ENCODE measurements at regions of chrX and their contacts with region 1.

Region 1: GRCh38 chrX:131827935-131828334 is 195.2 kb upstream of the STK26 start:
- DNase-seq: peak; percentile 49
- ATAC-seq: peak; percentile 71
- H3K4me3 Mint-ChIP-seq: peak overlapping the region; percentile 70
- H3K27ac Mint-ChIP-seq: peak overlapping the region; percentile 72
- H3K4me1 Mint-ChIP-seq: peaks cover 24% of the 10 kb centered on the region
- H3K27me3 Mint-ChIP-seq: no peaks in the 10 kb centered on the region

Region 2: DNA sequence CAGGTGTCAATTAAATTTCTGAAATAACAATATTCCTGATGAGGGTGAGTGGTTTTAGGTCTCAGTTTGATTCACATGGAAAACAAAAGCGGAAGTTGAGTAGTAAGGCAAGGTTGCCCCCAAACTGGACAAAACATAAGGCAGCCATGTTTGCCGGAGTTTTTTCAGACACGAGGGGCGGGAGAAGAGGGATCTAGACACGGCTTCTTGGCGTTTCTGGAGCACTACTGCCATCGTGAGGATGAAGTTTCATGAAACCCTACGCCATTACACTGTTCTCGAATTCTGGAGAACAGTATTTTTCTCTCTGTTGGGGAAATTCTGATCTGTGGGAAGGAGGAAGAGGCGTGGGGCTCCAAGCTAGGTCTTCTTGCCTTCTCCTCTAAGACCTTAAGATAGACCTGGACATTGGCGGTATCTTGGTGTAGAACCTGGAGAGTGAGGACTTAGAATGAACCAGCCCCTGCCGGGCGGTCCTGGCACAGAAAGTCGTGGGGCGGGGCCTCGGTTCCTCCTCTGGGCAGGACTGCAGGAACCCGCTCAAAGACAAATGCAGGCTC is 123.7 kb before region 1 on chrX:
- CTCF ChIA-PET with region 1: no interaction called
- DNase-seq: no peak
- ATAC-seq: no peak
- H3K4me3 Mint-ChIP-seq: no peak overlapping the region
- H3K27ac Mint-ChIP-seq: no peak overlapping the region
- H3K4me1 Mint-ChIP-seq: no peaks in the 10 kb centered on the region
- H3K27me3 Mint-ChIP-seq: no peaks in the 10 kb centered on the region

Region 3: DNA sequence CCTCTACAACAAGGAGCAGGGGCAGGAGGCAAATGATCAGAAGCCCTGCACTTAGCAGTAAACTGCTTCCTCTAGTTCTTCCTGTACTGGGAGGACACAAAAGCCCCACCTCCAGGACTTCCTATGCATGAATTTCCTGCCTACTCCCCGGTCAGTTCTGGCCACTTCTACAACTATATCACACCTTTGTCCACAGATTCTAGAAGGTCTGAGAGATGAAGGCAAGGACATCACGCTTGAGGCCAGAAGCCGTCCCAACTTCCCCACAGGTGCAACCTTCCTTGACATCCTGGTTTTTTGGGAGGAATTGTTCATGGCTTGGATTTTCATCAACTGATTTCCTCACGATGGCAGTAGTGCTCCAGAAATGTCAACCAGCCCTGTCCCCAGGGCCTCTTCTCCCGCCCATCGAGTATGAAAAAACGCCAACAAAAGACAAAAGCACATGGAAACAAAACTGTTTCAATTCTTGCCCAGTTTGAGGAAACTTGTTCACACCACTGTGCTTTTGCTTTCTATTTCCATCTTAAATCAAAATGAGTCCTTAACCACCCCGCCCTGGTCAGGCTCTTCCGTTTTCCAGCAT is 11.3 kb before region 1 on chrX:
- CTCF ChIA-PET with region 1: interaction called, 10 read pairs
- DNase-seq: peak; percentile 68
- ATAC-seq: peak; percentile 26
- H3K4me3 Mint-ChIP-seq: peak overlapping the region; percentile 53
- H3K27ac Mint-ChIP-seq: peak overlapping the region; percentile 72
- H3K4me1 Mint-ChIP-seq: peaks cover 25% of the 10 kb centered on the region
- H3K27me3 Mint-ChIP-seq: no peaks in the 10 kb centered on the region

Measured in activated CD8-positive, alpha-beta memory T cell treated with anti-CD3 and anti-CD28 coated beads, Interleukin-2, amount 10 ng/mL, durations not matched to agents 7 days and 5 days (primary cell).